ENCODE measurements at regions of chr15 and their contacts with region 1.

Region 1: DNA sequence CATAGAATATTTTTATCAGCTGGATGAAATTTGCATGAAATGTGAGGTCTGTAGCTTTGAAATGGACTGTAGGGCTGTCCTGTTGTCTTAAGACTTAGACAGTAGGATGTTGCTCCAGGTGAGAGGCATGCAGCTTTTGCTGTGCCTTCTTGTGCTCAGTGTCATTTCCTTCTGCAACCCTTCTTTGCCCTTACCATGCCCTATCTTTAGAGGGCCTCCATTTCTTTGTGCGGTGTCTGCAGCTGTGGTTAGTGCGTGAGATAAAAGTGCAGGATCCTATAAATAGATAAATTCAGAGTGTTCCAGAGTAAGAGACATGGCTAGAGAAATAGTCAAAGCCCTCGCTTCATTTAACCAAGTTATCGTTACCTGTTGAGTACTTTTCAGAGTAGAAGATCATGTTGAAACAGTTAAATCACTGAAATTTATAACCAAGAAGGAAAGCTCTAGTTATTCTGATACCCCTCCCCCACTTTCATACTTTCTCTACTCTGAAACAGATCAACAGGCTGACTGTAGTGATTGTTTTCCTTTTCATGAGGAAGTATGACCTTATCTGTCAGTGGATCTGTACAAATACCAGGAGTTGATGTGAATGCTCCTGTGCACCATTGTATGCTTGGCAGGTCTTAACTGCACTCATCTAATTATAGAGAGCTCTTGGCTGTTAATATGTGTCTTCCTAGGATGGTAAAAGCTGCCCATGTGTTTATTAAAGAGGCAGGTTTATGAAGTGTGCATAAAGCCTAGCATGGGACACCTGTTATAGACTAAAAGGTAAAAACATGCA is 18.2 kb downstream of the EIF3J start:
- DNase-seq: no peak
- H3K4me3 Mint-ChIP-seq: no peak overlapping the region
- H3K27ac Mint-ChIP-seq: peak overlapping the region; percentile 48
- H3K4me1 Mint-ChIP-seq: peaks cover 25% of the 10 kb centered on the region
- H3K27me3 Mint-ChIP-seq: no peaks in the 10 kb centered on the region

Region 2: GRCh38 chr15:44536962-44537734 is 18.0 kb before region 1 on chr15 and contains the start of gene EIF3J:
- CTCF ChIA-PET with region 1: interaction called, 4 read pairs
- POLR2A ChIA-PET with region 1: interaction called, 11 read pairs
- DNase-seq: peak; percentile 96
- H3K4me3 Mint-ChIP-seq: peak within 1 kb of the TSS; percentile 84
- H3K27ac Mint-ChIP-seq: peak within 1 kb of the TSS; percentile 95
- H3K4me1 Mint-ChIP-seq: peaks cover 56% of the 10 kb centered on the region
- H3K27me3 Mint-ChIP-seq: no peaks in the 10 kb centered on the region
- total RNA-seq, gene EIF3J: 70.6 to 87.8 TPM